Common myeloid progenitor, CD34-positive (primary cell): ENCODE measurements at regions of chr17 and their contacts with region 1.

Region 1: GRCh38 chr17:76458580-76459490 is 5.9 kb upstream of the UBE2O start:
- DNase-seq: peak; percentile 46 to 66 (median 62)
- H3K4me3 ChIP-seq: no peak overlapping the region
- H3K27ac ChIP-seq: no peak overlapping the region
- H3K4me1 ChIP-seq: no peaks in the 10 kb centered on the region
- H3K27me3 ChIP-seq: no peaks in the 10 kb centered on the region

Region 2: GRCh38 chr17:76408052-76408849 is 50.6 kb before region 1 on chr17:
- CTCF ChIA-PET with region 1: interaction called, 70 read pairs
- POLR2A ChIA-PET with region 1: no interaction called
- DNase-seq: peak; percentile 75 to 92 (median 88)
- H3K4me3 ChIP-seq: no peak overlapping the region
- H3K27ac ChIP-seq: no peak overlapping the region
- H3K4me1 ChIP-seq: peaks cover 0 to 6% (median 4%) of the 10 kb centered on the region in 4 experiments
- H3K27me3 ChIP-seq: no peaks in the 10 kb centered on the region

Region 3: GRCh38 chr17:76414334-76415295 is 44.2 kb before region 1 on chr17:
- CTCF ChIA-PET with region 1: interaction called, 70 read pairs
- POLR2A ChIA-PET with region 1: no interaction called
- DNase-seq: peak; percentile 72 to 90 (median 89)
- H3K4me3 ChIP-seq: no peak overlapping the region
- H3K27ac ChIP-seq: no peak overlapping the region
- H3K4me1 ChIP-seq: peaks cover 0 to 15% (median 13%) of the 10 kb centered on the region in 4 experiments
- H3K27me3 ChIP-seq: no peaks in the 10 kb centered on the region

Region 4: GRCh38 chr17:76446449-76447231 is 12.2 kb before region 1 on chr17:
- CTCF ChIA-PET with region 1: interaction called, 24 read pairs
- POLR2A ChIA-PET with region 1: no interaction called
- DNase-seq: peak in 1 of 3 donors; percentile 19
- H3K4me3 ChIP-seq: no peak overlapping the region
- H3K27ac ChIP-seq: no peak overlapping the region
- H3K4me1 ChIP-seq: peaks cover 8 to 56% (median 43%) of the 10 kb centered on the region in 4 experiments
- H3K27me3 ChIP-seq: no peaks in the 10 kb centered on the region